ENCODE measurements at regions of chr11 and their contacts with region 1.

Region 1: DNA sequence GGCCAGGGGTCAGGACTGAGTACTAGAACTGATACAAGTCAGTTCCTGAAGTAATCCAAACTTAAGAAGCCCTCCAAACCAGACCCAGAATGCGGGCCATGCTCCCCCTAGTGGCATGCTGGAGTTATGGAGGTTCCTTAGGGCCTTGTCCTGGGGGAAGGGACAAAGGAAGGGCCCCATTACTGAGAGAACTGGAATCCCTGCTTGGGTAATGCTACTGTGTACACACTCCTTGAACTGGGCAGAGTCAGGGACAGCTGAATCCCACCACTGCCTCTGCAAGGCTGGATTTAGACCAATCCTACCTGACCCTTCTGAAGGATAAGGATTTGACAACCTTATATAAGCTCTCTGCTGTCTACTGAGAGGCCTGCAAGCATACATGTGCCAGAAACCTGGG is 97.3 kb upstream of the AKIP1 start:
- DNase-seq: peak; percentile 79
- ATAC-seq: peak; percentile 68
- H3K4me3 ChIP-seq: no peak overlapping the region
- H3K27ac ChIP-seq: peak overlapping the region; percentile 52
- H3K4me1 ChIP-seq: peaks cover 63% of the 10 kb centered on the region
- H3K27me3 ChIP-seq: no peaks in the 10 kb centered on the region
- CTCF ChIP-seq: peak; percentile 100

Region 2: DNA sequence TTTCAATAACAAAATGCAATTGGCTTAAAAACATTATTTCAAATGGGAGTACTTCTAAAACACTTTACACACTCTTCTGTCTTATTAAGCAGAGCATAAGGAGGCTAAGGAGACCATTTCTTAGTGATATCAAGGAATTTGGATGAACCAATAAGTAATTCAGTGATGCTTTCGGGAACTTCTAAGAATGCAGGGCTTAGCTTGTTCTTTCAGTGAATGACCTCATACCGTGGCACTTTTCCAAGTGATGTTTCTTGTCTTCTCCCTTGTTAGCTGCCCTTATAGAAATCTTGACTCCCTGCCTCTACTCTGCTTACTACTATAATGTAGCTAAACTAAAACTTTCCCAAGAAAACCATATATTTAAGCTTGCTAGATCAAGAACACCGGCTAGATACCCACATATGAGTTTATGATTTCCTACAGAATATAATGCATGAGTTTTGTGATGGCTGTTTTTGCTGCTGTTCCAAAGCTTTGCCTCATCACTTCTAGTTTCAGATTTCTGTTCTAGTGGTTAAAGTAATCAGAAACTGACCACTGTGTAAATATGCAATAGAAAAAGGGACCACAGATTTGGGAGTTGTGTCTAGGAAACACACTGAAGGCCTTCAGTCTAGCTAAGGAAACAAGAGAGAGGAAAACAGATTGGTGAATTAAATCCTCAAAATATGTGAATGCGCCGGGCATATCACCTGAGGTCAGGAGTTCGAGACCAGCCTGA is 182.1 kb before region 1 on chr11:
- CTCF ChIA-PET with region 1: no interaction called
- POLR2A ChIA-PET with region 1: no interaction called
- in situ Hi-C with region 1: no loop called
- intact Hi-C with region 1: no loop called
- DNase-seq: no peak
- ATAC-seq: no peak
- H3K4me3 ChIP-seq: no peak overlapping the region
- H3K27ac ChIP-seq: no peak overlapping the region
- H3K4me1 ChIP-seq: no peaks in the 10 kb centered on the region
- H3K27me3 ChIP-seq: no peaks in the 10 kb centered on the region
- CTCF ChIP-seq: no peak

Region 3: GRCh38 chr11:8688414-8689362 is 125.0 kb before region 1 on chr11:
- CTCF ChIA-PET with region 1: interaction called, 3 read pairs
- POLR2A ChIA-PET with region 1: interaction called, 3 read pairs
- in situ Hi-C with region 1: no loop called
- intact Hi-C with region 1: loop called (anchors 5 kb)
- DNase-seq: peak; percentile 98
- ATAC-seq: peak; percentile 92
- H3K4me3 ChIP-seq: peak overlapping the region; percentile 68 to 69
- H3K27ac ChIP-seq: peak overlapping the region; percentile 100
- H3K4me1 ChIP-seq: peaks cover 49% of the 10 kb centered on the region
- H3K27me3 ChIP-seq: no peaks in the 10 kb centered on the region
- CTCF ChIP-seq: peak; percentile 69; the same call in 1 of the 2 replicates

Region 4: DNA sequence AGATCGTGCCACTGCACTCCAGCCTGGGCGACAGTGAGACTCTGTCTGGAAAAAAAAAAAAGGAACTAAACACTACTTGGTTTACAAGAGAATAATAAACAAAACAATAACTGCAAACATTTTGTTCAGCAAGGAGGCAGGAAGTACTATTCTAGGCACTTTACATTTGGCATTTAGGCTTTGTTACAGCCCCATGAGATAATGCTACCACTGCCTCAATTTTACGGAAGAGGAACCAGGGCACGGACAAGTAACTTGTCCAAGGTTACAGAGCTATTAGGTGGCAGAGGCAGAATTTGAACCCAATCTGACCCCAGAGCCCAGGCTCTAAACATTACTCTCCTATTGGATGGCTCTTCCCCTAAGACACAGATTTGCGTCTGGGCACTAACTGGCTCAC is 11.4 kb before region 1 on chr11:
- CTCF ChIA-PET with region 1: no interaction called
- POLR2A ChIA-PET with region 1: interaction called, 20 read pairs
- in situ Hi-C with region 1: no loop called
- intact Hi-C with region 1: no loop called
- DNase-seq: no peak
- ATAC-seq: no peak
- H3K4me3 ChIP-seq: no peak overlapping the region
- H3K27ac ChIP-seq: no peak overlapping the region
- H3K4me1 ChIP-seq: no peaks in the 10 kb centered on the region
- H3K27me3 ChIP-seq: no peaks in the 10 kb centered on the region
- CTCF ChIP-seq: no peak

Region 5: DNA sequence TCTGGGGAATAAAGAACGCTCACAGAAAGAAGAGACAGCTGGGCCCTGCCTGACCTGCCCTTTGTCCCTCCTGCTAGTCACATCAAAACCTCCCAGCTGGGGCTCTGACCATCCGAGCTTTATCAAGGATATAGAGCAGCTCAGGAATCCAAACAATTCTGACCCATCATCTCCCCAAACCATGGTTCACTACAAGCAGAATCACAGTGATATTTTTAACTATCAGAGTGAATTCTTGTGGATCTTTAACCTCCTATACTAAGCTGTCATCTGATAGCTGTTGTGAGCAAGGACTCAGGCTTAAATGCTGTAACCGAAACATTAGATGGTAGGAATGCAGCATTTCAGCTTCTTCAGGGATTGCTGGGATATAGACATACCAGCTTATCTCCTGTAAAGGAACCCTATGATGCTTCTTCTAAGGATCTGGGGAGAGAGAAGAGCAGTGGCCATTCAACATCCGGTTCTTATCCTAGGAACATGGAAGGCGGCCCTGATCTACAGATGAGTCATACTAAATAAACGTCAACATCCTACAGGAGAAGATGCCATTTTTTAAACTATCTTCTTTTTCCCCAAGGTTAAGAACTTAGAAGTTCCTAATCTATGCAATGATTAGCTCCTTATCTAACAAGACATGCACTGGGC is 12.6 kb after region 1 on chr11:
- CTCF ChIA-PET with region 1: no interaction called
- POLR2A ChIA-PET with region 1: interaction called, 10 read pairs
- in situ Hi-C with region 1: no loop called
- intact Hi-C with region 1: no loop called
- DNase-seq: no peak
- ATAC-seq: peak; percentile 65
- H3K4me3 ChIP-seq: no peak overlapping the region
- H3K27ac ChIP-seq: 0 out of 2 replicates have a peak overlapping the region, but pooled peaks have one; percentile 14
- H3K4me1 ChIP-seq: peaks cover 5% of the 10 kb centered on the region; the same call in 1 of the 2 replicates
- H3K27me3 ChIP-seq: no peaks in the 10 kb centered on the region
- CTCF ChIP-seq: no peak

Region 6: DNA sequence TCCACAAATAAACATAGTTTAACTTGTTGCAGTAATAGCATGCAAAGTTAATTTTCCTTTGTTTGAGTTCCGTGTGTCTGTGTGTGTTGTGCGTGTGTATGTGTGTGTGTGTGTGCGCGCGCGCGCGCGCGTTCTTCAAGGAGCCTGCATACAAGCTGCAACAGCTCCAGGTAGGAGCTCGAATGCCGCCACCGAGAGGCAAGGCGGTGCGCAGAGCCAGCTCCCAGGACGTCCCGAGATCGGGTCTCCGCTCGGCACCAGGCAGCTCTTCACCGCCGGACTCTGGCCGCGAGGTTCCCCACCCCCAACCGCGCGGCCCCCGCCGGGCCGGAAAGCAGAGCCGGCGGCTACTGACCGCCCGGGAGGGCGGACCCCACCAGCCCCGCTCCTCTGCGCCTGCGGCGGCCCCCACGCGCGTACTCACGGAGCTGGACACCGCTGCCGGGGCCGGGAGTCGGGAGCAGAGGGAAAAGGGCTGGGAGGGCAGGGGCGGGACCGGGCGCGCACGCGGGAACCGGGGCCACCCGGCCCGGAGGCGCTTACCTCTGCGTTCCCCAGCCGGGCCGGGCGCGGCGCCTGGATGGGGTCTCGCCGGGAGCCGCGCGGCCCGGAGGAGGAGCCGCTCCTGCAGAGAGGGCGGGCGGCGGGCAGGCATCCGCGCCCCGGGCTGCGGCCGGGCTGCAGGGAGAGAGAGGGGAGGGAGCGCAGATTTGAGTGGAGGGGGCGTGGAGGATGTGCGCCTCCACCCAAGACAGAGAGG is 56.9 kb after region 1 on chr11:
- CTCF ChIA-PET with region 1: interaction called, 10 read pairs
- POLR2A ChIA-PET with region 1: no interaction called
- in situ Hi-C with region 1: no loop called
- intact Hi-C with region 1: no loop called
- DNase-seq: no peak
- ATAC-seq: peak; percentile 90
- H3K4me3 ChIP-seq: peak overlapping the region; percentile 67 to 72
- H3K27ac ChIP-seq: peak overlapping the region; percentile 73
- H3K4me1 ChIP-seq: peaks cover 30% of the 10 kb centered on the region
- H3K27me3 ChIP-seq: no peaks in the 10 kb centered on the region
- CTCF ChIP-seq: peak; percentile 55

Region 7: DNA sequence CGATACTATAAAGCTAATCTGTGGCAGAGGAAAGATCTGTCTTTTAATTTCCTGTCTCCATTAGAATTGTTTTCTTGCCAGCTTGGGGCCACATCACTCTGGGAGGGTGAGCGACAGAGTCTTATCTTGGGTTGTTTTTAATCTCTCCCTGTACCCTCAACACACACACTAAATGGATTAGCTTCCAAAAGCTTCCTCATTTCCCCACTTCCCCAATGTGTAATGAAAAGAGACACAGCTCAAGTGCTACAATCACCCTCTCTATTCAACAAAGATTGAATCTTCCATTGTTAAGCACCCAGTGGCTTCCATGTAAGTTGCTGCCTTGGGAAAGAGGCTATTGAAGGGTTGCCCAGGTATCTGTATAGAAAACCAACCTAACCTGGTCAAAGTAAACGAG is 135.2 kb after region 1 on chr11:
- CTCF ChIA-PET with region 1: no interaction called
- POLR2A ChIA-PET with region 1: no interaction called
- in situ Hi-C with region 1: no loop called
- intact Hi-C with region 1: no loop called
- DNase-seq: no peak
- ATAC-seq: no peak
- H3K4me3 ChIP-seq: no peak overlapping the region
- H3K27ac ChIP-seq: no peak overlapping the region
- H3K4me1 ChIP-seq: no peaks in the 10 kb centered on the region
- H3K27me3 ChIP-seq: no peaks in the 10 kb centered on the region
- CTCF ChIP-seq: no peak

Measured in Panc1 (cell line).